ENCODE measurements at regions of chr5 and their contacts with region 1.

Region 1: DNA sequence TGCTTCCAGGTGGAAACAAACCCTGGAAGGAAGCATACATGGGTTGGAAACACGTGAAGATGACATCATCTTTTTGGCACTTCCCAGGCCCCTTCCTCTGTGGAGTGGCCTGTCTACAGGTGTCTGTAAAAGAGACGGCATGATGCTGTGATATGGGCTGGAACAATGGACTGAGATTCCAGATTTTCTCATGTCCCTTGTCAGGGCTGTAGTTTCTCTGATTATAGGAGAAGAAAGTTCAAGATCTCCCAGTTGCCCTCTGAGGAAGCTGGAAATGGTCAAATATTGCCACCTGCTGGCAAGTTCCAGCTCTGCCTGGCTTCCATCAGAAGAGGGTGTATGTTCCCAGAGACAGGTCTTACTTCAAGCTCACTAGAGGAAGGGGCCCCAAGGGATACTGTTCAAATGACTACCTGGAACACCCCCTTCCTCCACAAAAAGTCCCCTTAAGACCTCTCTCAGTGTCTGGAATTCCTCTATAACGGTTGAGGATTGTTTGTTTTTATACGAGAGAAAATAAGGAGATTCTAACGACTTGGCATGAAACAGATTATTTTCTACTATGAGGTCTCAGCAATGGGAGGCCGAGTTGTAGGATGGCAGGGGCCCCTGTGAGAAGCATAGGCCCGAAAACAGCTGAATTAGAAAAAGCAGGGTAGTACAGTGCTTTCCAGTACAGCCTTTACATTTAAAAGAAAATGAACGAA is 7.3 kb upstream of the ANXA6 start:
- DNase-seq: peak; percentile 85
- H3K4me3 ChIP-seq: no peak overlapping the region
- H3K27ac ChIP-seq: no peak overlapping the region
- H3K4me1 ChIP-seq: peaks cover 0 to 6% (median 0%) of the 10 kb centered on the region in 4 donors
- H3K27me3 ChIP-seq: no peaks in the 10 kb centered on the region
- CTCF ChIP-seq: peak; percentile 83 to 91 (median 87)
- EP300 ChIP-seq: no peak
- POLR2A ChIP-seq: no peak

Region 2: DNA sequence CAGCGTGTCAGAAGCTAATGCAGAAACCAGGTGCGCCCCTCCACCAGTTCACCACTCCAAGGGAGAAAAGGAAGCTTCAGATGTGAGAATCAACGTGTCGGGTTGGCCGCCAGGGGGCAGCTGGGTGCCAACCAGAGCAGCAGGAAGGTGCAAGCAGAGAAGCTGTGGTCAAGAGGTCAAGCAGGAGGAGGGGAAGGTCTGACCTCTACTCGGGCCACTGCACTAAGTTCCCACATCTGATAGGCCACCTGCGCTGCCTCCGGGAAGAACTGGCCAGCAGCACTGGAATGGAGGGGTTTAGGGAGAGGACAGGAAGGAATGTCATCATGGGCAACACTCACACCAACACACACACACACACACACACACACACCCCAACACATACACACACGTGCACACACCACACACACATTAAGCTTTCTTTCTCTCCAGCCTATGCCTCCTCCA is 38.6 kb before region 1 on chr5:
- in situ Hi-C with region 1: loop called in 2 of 4 experiments (anchors 5 kb)
- intact Hi-C with region 1: loop called (anchors 2 kb)
- DNase-seq: peak; percentile 77
- H3K4me3 ChIP-seq: no peak overlapping the region
- H3K27ac ChIP-seq: peak overlapping the region in 2 of 4 donors; percentile 36 to 39
- H3K4me1 ChIP-seq: peaks cover 0 to 12% (median 0%) of the 10 kb centered on the region in 4 donors
- H3K27me3 ChIP-seq: no peaks in the 10 kb centered on the region
- CTCF ChIP-seq: peak; percentile 75 to 90 (median 85)
- EP300 ChIP-seq: no peak
- POLR2A ChIP-seq: no peak